ENCODE measurements at regions of chr7 and their contacts with region 1.

Region 1: GRCh38 chr7:80087051-80087770 is 47.4 kb upstream of the GNAI1 start:
- DNase-seq: peak; percentile 59
- H3K4me3 ChIP-seq: no peak overlapping the region
- H3K27ac ChIP-seq: peak overlapping the region; percentile 77
- H3K27me3 ChIP-seq: no peaks in the 10 kb centered on the region
- CTCF ChIP-seq: no peak

Region 2: DNA sequence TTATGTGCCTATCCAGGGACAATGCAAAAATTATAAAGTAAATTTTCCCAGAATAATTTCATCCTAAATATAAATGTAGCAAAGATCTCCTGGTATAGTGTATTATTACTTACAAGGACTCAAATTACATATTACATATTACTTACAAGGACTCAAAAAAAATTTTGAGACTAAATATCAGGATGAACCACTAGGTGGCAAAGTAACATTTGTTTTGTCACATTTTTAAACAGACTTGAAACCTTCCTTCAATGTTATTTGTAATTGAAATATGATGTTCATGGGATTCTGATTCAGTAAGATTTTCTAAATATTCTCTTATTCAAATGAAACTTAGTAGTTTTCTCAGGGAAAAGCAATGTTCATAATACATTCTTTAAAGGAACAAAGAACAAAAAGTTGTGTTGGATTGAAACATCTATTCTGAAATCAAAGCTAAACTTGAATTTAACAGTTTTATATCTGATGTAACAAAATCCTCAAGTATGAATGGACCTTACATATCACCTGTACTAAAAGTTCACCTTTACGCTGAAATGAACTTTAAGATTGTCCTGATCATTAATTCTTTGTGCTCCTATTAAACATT is 26.9 kb before region 1 on chr7:
- CTCF ChIA-PET with region 1: interaction called, 10 read pairs
- POLR2A ChIA-PET with region 1: no interaction called
- DNase-seq: peak; percentile 24
- H3K4me3 ChIP-seq: no peak overlapping the region
- H3K27ac ChIP-seq: no peak overlapping the region
- H3K27me3 ChIP-seq: no peaks in the 10 kb centered on the region
- CTCF ChIP-seq: peak; percentile 49

Region 3: GRCh38 chr7:80107278-80107677 is 20.1 kb after region 1 on chr7:
- CTCF ChIA-PET with region 1: no interaction called
- POLR2A ChIA-PET with region 1: no interaction called
- DNase-seq: no peak
- H3K4me3 ChIP-seq: no peak overlapping the region
- H3K27ac ChIP-seq: no peak overlapping the region
- H3K27me3 ChIP-seq: no peaks in the 10 kb centered on the region
- CTCF ChIP-seq: no peak

Region 4: DNA sequence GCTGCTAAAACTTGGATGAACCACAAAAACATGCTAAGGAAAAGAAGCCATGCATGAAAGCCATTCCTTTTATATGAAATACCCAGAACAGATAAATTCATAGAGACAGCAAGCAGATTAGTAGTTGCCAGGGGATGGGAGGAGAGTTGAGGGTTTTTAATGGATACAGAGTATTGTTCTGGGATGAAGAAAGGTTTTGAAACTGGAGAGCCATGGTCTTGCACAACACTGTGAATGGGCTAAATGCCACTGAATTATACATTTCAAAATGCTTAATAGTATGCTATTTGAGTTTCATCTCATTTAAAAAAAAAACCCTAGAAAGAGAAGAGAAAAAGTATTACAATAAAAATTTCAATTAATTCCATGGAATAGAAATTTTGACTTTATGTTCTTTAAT is 270.3 kb after region 1 on chr7:
- CTCF ChIA-PET with region 1: no interaction called
- POLR2A ChIA-PET with region 1: no interaction called
- DNase-seq: no peak
- H3K4me3 ChIP-seq: no peak overlapping the region
- H3K27ac ChIP-seq: no peak overlapping the region
- H3K27me3 ChIP-seq: no peaks in the 10 kb centered on the region
- CTCF ChIP-seq: no peak

Measured in AG04450 (cell line).